ENCODE measurements at regions of chr10 and their contacts with region 1.

Region 1: DNA sequence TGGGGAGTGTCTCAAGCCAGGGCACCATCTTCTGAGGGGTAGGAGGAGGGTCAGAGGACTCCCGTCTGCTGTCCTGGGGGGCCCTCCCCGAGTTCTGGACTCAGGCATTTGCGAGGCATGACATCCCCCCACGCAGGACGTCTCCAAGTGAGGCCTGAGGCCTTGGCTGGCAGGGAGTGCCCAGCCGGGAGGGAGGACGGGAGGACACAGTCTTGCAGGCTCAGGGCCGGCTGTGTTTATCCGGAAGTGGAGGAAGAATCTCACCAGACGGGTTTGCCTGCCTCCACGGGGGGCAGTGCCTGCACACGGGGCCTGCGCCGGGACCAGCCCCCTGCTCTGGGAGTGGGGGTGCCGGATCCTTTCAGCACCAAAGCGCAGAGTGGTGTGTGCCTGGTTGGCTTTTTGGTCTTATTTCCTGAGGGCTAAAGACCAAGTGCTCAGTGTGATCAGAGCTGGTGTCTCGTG is 10.8 kb downstream of the PWWP2B start:
- DNase-seq: peak; percentile 49
- H3K4me3 ChIP-seq: no peak overlapping the region
- H3K27ac ChIP-seq: peak overlapping the region; percentile 10
- H3K4me1 ChIP-seq: peaks cover 23% of the 10 kb centered on the region
- H3K27me3 ChIP-seq: no peaks in the 10 kb centered on the region
- CTCF ChIP-seq: peak in 1 of 2 donors; percentile 3
- POLR2A ChIP-seq: no peak

Region 2: GRCh38 chr10:132418533-132419416 is 10.9 kb after region 1 on chr10:
- CTCF ChIA-PET with region 1: interaction called, 3 read pairs
- POLR2A ChIA-PET with region 1: no interaction called
- dilution Hi-C with region 1: no loop called
- intact Hi-C with region 1: loop called (anchors 1 kb)
- DNase-seq: no peak
- H3K4me3 ChIP-seq: no peak overlapping the region
- H3K27ac ChIP-seq: peak overlapping the region; percentile 21
- H3K4me1 ChIP-seq: peaks cover 15% of the 10 kb centered on the region
- H3K27me3 ChIP-seq: no peaks in the 10 kb centered on the region
- CTCF ChIP-seq: no peak
- POLR2A ChIP-seq: no peak

Measured in endothelial cell of umbilical vein (primary cell).